ENCODE measurements at regions of chr5 and their contacts with region 1.

Region 1: GRCh38 chr5:150458819-150459557 is 9.4 kb upstream of the RPS14 start:
- DNase-seq: peak; percentile 78 to 93 (median 87)
- ATAC-seq: peak; percentile 91
- H3K4me3 ChIP-seq: no peak overlapping the region
- H3K4me3 Mint-ChIP-seq: no peak overlapping the region
- H3K27ac ChIP-seq: no peak overlapping the region
- H3K27ac Mint-ChIP-seq: peak overlapping the region; percentile 61
- H3K4me1 ChIP-seq: peaks cover 37% of the 10 kb centered on the region
- H3K4me1 Mint-ChIP-seq: peaks cover 45% of the 10 kb centered on the region
- H3K27me3 ChIP-seq: no peaks in the 10 kb centered on the region
- H3K27me3 Mint-ChIP-seq: no peaks in the 10 kb centered on the region
- CTCF ChIP-seq: peak; percentile 80

Region 2: GRCh38 chr5:150544611-150545219 is 85.7 kb after region 1 on chr5:
- CTCF ChIA-PET with region 1: interaction called, 3 read pairs
- POLR2A ChIA-PET with region 1: no interaction called
- intact Hi-C with region 1: loop called in 1 of 2 experiments (anchors 5 kb)
- DNase-seq: peak; percentile 19 to 73 (median 44)
- ATAC-seq: peak; percentile 75
- H3K4me3 ChIP-seq: no peak overlapping the region
- H3K4me3 Mint-ChIP-seq: no peak overlapping the region
- H3K27ac ChIP-seq: no peak overlapping the region
- H3K27ac Mint-ChIP-seq: no peak overlapping the region
- H3K4me1 ChIP-seq: no peaks in the 10 kb centered on the region
- H3K4me1 Mint-ChIP-seq: no peaks in the 10 kb centered on the region
- H3K27me3 ChIP-seq: no peaks in the 10 kb centered on the region
- H3K27me3 Mint-ChIP-seq: no peaks in the 10 kb centered on the region
- CTCF ChIP-seq: peak; percentile 48

Region 3: GRCh38 chr5:150656191-150657132 is 197.5 kb after region 1 on chr5:
- CTCF ChIA-PET with region 1: interaction called, 5 read pairs
- POLR2A ChIA-PET with region 1: no interaction called
- intact Hi-C with region 1: loop called (anchors 2 to 5 kb)
- DNase-seq: peak; percentile 67 to 92 (median 80)
- ATAC-seq: peak; percentile 94
- H3K4me3 ChIP-seq: peak overlapping the region; percentile 68
- H3K4me3 Mint-ChIP-seq: peak overlapping the region; percentile 85
- H3K27ac ChIP-seq: no peak overlapping the region
- H3K27ac Mint-ChIP-seq: no peak overlapping the region
- H3K4me1 ChIP-seq: peaks cover 15% of the 10 kb centered on the region
- H3K4me1 Mint-ChIP-seq: peaks cover 10% of the 10 kb centered on the region
- H3K27me3 ChIP-seq: no peaks in the 10 kb centered on the region
- H3K27me3 Mint-ChIP-seq: no peaks in the 10 kb centered on the region
- CTCF ChIP-seq: peak; percentile 47

Region 4: GRCh38 chr5:150710165-150710564 is 251.2 kb after region 1 on chr5:
- CTCF ChIA-PET with region 1: no interaction called
- POLR2A ChIA-PET with region 1: no interaction called
- intact Hi-C with region 1: loop called in 1 of 2 experiments (anchors 2 kb)
- DNase-seq: peak in 3 of 14 experiments; percentile 19 to 32 (median 31)
- ATAC-seq: no peak
- H3K4me3 ChIP-seq: no peak overlapping the region
- H3K4me3 Mint-ChIP-seq: no peak overlapping the region
- H3K27ac ChIP-seq: no peak overlapping the region
- H3K27ac Mint-ChIP-seq: no peak overlapping the region
- H3K4me1 ChIP-seq: no peaks in the 10 kb centered on the region
- H3K4me1 Mint-ChIP-seq: no peaks in the 10 kb centered on the region
- H3K27me3 ChIP-seq: no peaks in the 10 kb centered on the region
- H3K27me3 Mint-ChIP-seq: no peaks in the 10 kb centered on the region
- CTCF ChIP-seq: peak; percentile 27